CD4-positive, alpha-beta T cell (primary cell): ENCODE measurements at regions of chr14 and their contacts with region 1.

Region 1: GRCh38 chr14:35134328-35135123 is 12.2 kb downstream of the PRORP start:
- DNase-seq: no peak
- ATAC-seq: no peak
- H3K4me3 ChIP-seq: no peak overlapping the region
- H3K4me3 Mint-ChIP-seq: no peak overlapping the region
- H3K27ac ChIP-seq: no peak overlapping the region
- H3K27ac Mint-ChIP-seq: peak overlapping the region; percentile 36
- H3K4me1 ChIP-seq: peaks cover 4% of the 10 kb centered on the region
- H3K4me1 Mint-ChIP-seq: peaks cover 35% of the 10 kb centered on the region
- H3K27me3 ChIP-seq: no peaks in the 10 kb centered on the region
- H3K27me3 Mint-ChIP-seq: no peaks in the 10 kb centered on the region
- CTCF ChIP-seq: no peak

Region 2: GRCh38 chr14:35229495-35230089 is 95.1 kb after region 1 on chr14:
- CTCF ChIA-PET with region 1: no interaction called
- POLR2A ChIA-PET with region 1: no interaction called
- intact Hi-C with region 1: loop called in 1 of 2 experiments (anchors 5 kb)
- DNase-seq: peak in 3 of 14 experiments; percentile 39 to 52 (median 45)
- ATAC-seq: peak; percentile 51
- H3K4me3 ChIP-seq: no peak overlapping the region
- H3K4me3 Mint-ChIP-seq: no peak overlapping the region
- H3K27ac ChIP-seq: no peak overlapping the region
- H3K27ac Mint-ChIP-seq: no peak overlapping the region
- H3K4me1 ChIP-seq: peaks cover 10% of the 10 kb centered on the region
- H3K4me1 Mint-ChIP-seq: peaks cover 19% of the 10 kb centered on the region
- H3K27me3 ChIP-seq: no peaks in the 10 kb centered on the region
- H3K27me3 Mint-ChIP-seq: no peaks in the 10 kb centered on the region
- CTCF ChIP-seq: peak; percentile 64

Region 3: GRCh38 chr14:35687335-35687939 is 552.9 kb after region 1 on chr14:
- CTCF ChIA-PET with region 1: no interaction called
- POLR2A ChIA-PET with region 1: no interaction called
- intact Hi-C with region 1: loop called in 1 of 2 experiments (anchors 10 kb)
- DNase-seq: peak in 6 of 14 experiments; percentile 1 to 50 (median 33)
- ATAC-seq: peak; percentile 49
- H3K4me3 ChIP-seq: no peak overlapping the region
- H3K4me3 Mint-ChIP-seq: no peak overlapping the region
- H3K27ac ChIP-seq: no peak overlapping the region
- H3K27ac Mint-ChIP-seq: no peak overlapping the region
- H3K4me1 ChIP-seq: no peaks in the 10 kb centered on the region
- H3K4me1 Mint-ChIP-seq: no peaks in the 10 kb centered on the region
- H3K27me3 ChIP-seq: no peaks in the 10 kb centered on the region
- H3K27me3 Mint-ChIP-seq: no peaks in the 10 kb centered on the region
- CTCF ChIP-seq: peak; percentile 79